ENCODE measurements at regions of chr12 and their contacts with region 1.

Region 1: GRCh38 chr12:49232940-49233841 is 31.7 kb upstream of the TUBA1C start:
- DNase-seq: no peak
- ATAC-seq: no peak
- H3K4me3 Mint-ChIP-seq: peak overlapping the region; percentile 76
- H3K27ac Mint-ChIP-seq: peak overlapping the region; percentile 83
- H3K4me1 Mint-ChIP-seq: peaks cover 20% of the 10 kb centered on the region
- H3K27me3 Mint-ChIP-seq: no peaks in the 10 kb centered on the region

Region 2: DNA sequence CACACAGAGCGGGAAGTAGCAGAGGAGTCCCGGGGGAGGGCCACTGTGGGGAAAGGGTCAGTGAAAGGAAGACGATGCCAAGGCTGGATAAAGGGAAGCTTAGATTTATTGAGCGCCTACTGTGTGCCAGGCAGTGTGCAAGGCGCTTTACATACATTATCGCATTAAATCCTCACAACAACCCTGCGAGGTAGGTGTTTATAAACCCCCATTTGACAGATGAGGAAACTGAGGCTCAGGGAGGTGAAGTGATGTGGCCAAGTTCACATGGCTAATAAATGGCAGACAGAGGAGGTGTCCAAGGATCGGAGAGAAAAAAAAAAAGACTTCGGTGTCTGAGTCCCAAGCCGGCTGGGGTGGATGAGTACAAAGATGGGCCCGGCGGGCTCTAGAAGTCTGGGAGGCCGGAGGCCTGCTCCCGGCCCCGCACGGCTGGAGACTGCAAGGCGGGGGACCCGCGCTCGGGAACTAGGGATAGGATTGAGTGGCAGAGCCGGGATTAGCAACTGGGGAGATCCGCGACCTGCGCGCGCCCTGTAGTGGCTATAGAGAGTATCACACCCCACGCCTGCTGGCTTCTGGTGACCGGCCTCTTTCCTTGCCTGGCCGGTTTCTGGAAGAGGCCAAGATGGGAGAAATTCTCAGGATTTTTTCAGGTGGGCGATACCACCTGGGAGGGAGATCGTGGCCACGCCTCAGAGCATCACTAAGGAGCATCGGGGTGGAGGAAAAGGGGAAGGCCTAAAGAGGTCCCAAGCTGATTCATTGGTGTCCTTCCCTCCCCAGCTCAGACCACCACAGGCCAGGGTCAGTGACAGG is 237.9 kb before region 1 on chr12:
- CTCF ChIA-PET with region 1: interaction called, 3 read pairs
- POLR2A ChIA-PET with region 1: no interaction called
- intact Hi-C with region 1: loop called in 1 of 2 experiments (anchors 5 kb)
- DNase-seq: peak; percentile 77
- ATAC-seq: peak; percentile 13
- H3K4me3 Mint-ChIP-seq: no peak overlapping the region
- H3K27ac Mint-ChIP-seq: no peak overlapping the region
- H3K4me1 Mint-ChIP-seq: peaks cover 26% of the 10 kb centered on the region
- H3K27me3 Mint-ChIP-seq: peaks cover 52% of the 10 kb centered on the region

Region 3: GRCh38 chr12:49069507-49070346 is 163.5 kb before region 1 on chr12 and contains the start of gene RHEBL1:
- CTCF ChIA-PET with region 1: interaction called, 13 read pairs
- POLR2A ChIA-PET with region 1: interaction called, 8 read pairs
- intact Hi-C with region 1: loop called in 1 of 2 experiments (anchors 1 kb)
- DNase-seq: peak; percentile 100
- ATAC-seq: peak; percentile 100
- H3K4me3 Mint-ChIP-seq: peak within 1 kb of the TSS; percentile 94
- H3K27ac Mint-ChIP-seq: peak within 1 kb of the TSS; percentile 91
- H3K4me1 Mint-ChIP-seq: peaks cover 15% of the 10 kb centered on the region
- H3K27me3 Mint-ChIP-seq: no peaks in the 10 kb centered on the region
- total RNA-seq, gene RHEBL1: 6.7 to 13.3 TPM

Region 4: GRCh38 chr12:49188914-49189367 is 44.2 kb before region 1 on chr12 and contains the start of gene TUBA1A:
- CTCF ChIA-PET with region 1: interaction called, 19 read pairs
- POLR2A ChIA-PET with region 1: interaction called, 5 read pairs
- intact Hi-C with region 1: loop called (anchors 1 kb)
- DNase-seq: peak; percentile 97
- ATAC-seq: peak; percentile 95
- H3K4me3 Mint-ChIP-seq: peak within 1 kb of the TSS; percentile 92
- H3K27ac Mint-ChIP-seq: peak within 1 kb of the TSS; percentile 92
- H3K4me1 Mint-ChIP-seq: peaks cover 24% of the 10 kb centered on the region
- H3K27me3 Mint-ChIP-seq: no peaks in the 10 kb centered on the region
- total RNA-seq, gene TUBA1A: 75.7 to 98.5 TPM